PC-9 (cell line): ENCODE measurements at regions of chr10 and their contacts with region 1.

Region 1: DNA sequence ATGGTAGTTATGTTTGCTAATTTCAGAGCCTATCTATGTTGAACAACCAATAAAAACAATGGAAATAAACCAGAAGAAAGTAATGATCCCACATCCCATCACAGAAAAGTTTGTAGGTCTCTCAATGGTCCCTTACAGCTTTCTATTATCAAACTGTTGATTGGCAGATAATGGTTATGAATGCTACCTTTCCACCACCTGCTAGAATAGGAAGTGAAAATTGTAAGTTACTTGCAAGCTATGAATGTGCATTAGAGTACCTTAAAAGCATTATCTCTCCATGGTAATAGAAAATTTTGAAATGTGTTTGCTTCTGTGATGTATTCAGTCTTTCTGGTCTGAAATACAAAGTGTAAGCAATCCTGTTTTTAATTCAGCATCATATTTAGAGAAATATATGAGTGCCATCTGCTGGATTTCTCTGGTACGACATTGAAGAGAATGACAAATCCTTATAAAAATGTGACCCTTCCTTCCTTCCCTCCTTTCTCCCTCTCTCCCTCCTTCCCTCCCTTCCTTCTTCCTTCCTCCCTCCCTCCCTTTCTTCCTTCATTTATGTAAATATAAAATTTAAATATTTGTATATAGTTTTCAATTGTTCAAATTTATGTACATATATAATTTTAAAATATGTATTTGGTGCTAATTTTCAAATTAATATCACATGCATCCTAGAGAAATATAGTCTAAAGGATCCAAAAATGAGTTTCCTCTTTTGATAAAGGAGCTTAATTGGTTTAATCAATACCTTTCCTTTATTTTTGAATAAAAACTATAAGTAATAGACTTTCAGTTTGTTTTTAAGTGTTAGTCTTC is 41.4 kb upstream of the PNLIPRP3 start:
- DNase-seq: no peak
- H3K4me3 ChIP-seq: no peak overlapping the region
- H3K27ac ChIP-seq: no peak overlapping the region
- H3K4me1 ChIP-seq: no peaks in the 10 kb centered on the region
- H3K27me3 ChIP-seq: peaks cover 1% of the 10 kb centered on the region; the same call in 1 of the 2 replicates
- CTCF ChIP-seq: peak; percentile 64

Region 2: GRCh38 chr10:115355162-115355760 is 1030.9 kb before region 1 on chr10:
- CTCF ChIA-PET with region 1: no interaction called
- POLR2A ChIA-PET with region 1: no interaction called
- intact Hi-C with region 1: loop called (anchors 1 kb)
- DNase-seq: peak in 1 of 2 experiments; percentile 20
- H3K4me3 ChIP-seq: no peak overlapping the region
- H3K27ac ChIP-seq: no peak overlapping the region
- H3K4me1 ChIP-seq: no peaks in the 10 kb centered on the region
- H3K27me3 ChIP-seq: no peaks in the 10 kb centered on the region
- CTCF ChIP-seq: peak; percentile 73

Region 3: GRCh38 chr10:115436999-115437398 is 949.2 kb before region 1 on chr10:
- CTCF ChIA-PET with region 1: no interaction called
- POLR2A ChIA-PET with region 1: no interaction called
- intact Hi-C with region 1: loop called (anchors 5 kb)
- DNase-seq: no peak
- H3K4me3 ChIP-seq: no peak overlapping the region
- H3K27ac ChIP-seq: no peak overlapping the region
- H3K4me1 ChIP-seq: no peaks in the 10 kb centered on the region
- H3K27me3 ChIP-seq: no peaks in the 10 kb centered on the region
- CTCF ChIP-seq: no peak

Region 4: GRCh38 chr10:115706026-115706781 is 680.0 kb before region 1 on chr10:
- CTCF ChIA-PET with region 1: interaction called, 3 read pairs
- POLR2A ChIA-PET with region 1: no interaction called
- intact Hi-C with region 1: loop called (anchors 5 kb)
- DNase-seq: no peak
- H3K4me3 ChIP-seq: no peak overlapping the region
- H3K27ac ChIP-seq: no peak overlapping the region
- H3K4me1 ChIP-seq: no peaks in the 10 kb centered on the region
- H3K27me3 ChIP-seq: no peaks in the 10 kb centered on the region
- CTCF ChIP-seq: peak; percentile 58

Region 5: GRCh38 chr10:116371737-116372136 is 14.5 kb before region 1 on chr10:
- CTCF ChIA-PET with region 1: no interaction called
- POLR2A ChIA-PET with region 1: no interaction called
- intact Hi-C with region 1: no loop called
- DNase-seq: no peak
- H3K4me3 ChIP-seq: no peak overlapping the region
- H3K27ac ChIP-seq: no peak overlapping the region
- H3K4me1 ChIP-seq: no peaks in the 10 kb centered on the region
- H3K27me3 ChIP-seq: no peaks in the 10 kb centered on the region
- CTCF ChIP-seq: no peak